Mammary epithelial cell (primary cell): ENCODE measurements at regions of chrX and their contacts with region 1.

Region 1: DNA sequence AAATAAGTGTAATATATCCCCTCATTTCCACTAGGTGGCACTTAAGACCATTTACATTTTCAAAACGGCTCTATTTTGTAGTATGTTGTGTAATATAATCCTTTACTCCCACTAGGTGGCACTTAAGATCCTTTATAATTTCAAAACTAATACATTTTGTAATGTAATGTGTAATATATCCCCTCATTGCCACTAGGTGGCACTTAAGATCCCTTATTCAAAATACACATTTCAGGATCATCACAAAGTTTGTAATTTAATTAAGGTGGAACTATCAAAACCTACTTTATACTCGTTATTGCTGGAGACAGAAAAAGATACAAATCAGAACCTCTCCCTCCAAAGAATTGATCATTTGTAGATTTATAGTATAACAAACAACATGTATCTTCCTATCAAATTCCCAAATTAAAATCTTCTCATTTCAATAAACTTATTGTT is 132.5 kb downstream of the ARHGAP6 start:
- DNase-seq: peak; percentile 64
- H3K4me3 ChIP-seq: no peak overlapping the region
- H3K27ac ChIP-seq: no peak overlapping the region
- H3K4me1 ChIP-seq: no peaks in the 10 kb centered on the region
- H3K27me3 ChIP-seq: peaks cover 3% of the 10 kb centered on the region
- CTCF ChIP-seq: peak; percentile 70 to 89

Region 2: GRCh38 chrX:11381464-11381863 is 151.8 kb before region 1 on chrX:
- CTCF ChIA-PET with region 1: interaction called, 3 read pairs
- dilution Hi-C with region 1: no loop called
- in situ Hi-C with region 1: no loop called
- intact Hi-C with region 1: loop called (anchors 1 kb)
- DNase-seq: peak; percentile 38
- H3K4me3 ChIP-seq: no peak overlapping the region
- H3K27ac ChIP-seq: no peak overlapping the region
- H3K4me1 ChIP-seq: no peaks in the 10 kb centered on the region
- H3K27me3 ChIP-seq: no peaks in the 10 kb centered on the region
- CTCF ChIP-seq: peak; percentile 53 to 62

Region 3: GRCh38 chrX:11724122-11725017 is 191.1 kb after region 1 on chrX:
- CTCF ChIA-PET with region 1: no interaction called
- dilution Hi-C with region 1: no loop called
- in situ Hi-C with region 1: no loop called
- intact Hi-C with region 1: loop called (anchors 1 kb)
- DNase-seq: peak; percentile 14
- H3K4me3 ChIP-seq: no peak overlapping the region
- H3K27ac ChIP-seq: no peak overlapping the region
- H3K4me1 ChIP-seq: no peaks in the 10 kb centered on the region
- H3K27me3 ChIP-seq: no peaks in the 10 kb centered on the region
- CTCF ChIP-seq: peak; percentile 72 to 74

Region 4: DNA sequence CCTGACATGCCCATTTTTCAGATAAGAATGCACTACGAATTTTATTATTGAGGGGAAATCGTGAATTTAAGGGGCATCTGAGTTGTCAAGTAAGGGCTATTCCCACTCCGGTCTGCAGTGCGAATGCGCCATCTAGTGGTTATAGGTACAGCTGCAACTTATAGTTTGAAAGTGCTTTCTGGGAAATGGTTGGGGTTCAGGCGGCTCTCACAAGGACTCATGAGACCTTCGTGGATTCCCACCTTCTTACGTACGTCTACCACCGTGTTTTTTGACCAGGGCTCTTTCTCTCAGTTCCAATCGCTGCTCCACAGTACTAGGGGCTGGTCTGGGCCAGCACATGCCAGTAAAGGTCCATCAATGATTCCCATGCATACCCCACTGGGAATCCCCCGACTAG is 237.1 kb after region 1 on chrX:
- CTCF ChIA-PET with region 1: no interaction called
- dilution Hi-C with region 1: no loop called
- in situ Hi-C with region 1: loop called (anchors 5 to 25 kb)
- intact Hi-C with region 1: loop called (anchors 1 kb)
- DNase-seq: peak; percentile 31
- H3K4me3 ChIP-seq: no peak overlapping the region
- H3K27ac ChIP-seq: no peak overlapping the region
- H3K4me1 ChIP-seq: no peaks in the 10 kb centered on the region
- H3K27me3 ChIP-seq: no peaks in the 10 kb centered on the region
- CTCF ChIP-seq: peak; percentile 92

Region 5: DNA sequence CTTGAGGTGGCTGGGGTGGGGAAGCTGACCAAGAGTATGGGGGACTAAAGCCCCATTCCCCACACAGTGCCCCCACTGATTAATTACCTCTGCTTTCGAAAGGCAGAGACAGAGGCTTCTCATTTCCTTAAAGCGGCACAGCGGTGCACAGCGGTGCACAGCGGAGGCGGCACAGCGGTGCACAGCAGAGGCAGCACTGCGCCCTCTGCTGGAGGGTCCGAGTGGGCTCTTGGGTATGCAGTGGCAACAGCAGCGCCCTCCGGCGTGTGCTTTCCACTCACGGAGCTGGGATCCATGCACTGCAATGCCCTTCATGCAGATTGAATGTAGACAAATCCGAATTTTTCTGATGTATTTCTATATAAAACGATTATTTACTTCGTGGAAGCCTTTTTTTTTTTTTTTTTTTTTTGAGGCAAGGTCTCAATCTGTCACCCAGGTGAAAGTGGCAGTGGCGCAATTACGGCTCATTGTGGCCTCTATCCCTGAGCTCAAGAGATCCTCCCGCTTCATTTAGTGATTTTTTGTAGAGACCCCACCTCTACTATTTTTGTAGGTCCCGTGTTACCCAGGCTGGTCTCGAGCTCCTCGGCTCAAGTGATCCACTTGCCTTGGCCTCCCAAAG is 1238.3 kb after region 1 on chrX:
- CTCF ChIA-PET with region 1: no interaction called
- dilution Hi-C with region 1: no loop called
- in situ Hi-C with region 1: loop called in 1 of 2 experiments (anchors 10 kb)
- intact Hi-C with region 1: loop called (anchors 5 kb)
- DNase-seq: no peak
- H3K4me3 ChIP-seq: no peak overlapping the region
- H3K27ac ChIP-seq: no peak overlapping the region
- H3K4me1 ChIP-seq: no peaks in the 10 kb centered on the region
- H3K27me3 ChIP-seq: peaks cover 2% of the 10 kb centered on the region
- CTCF ChIP-seq: peak; percentile 44 to 54